ENCODE measurements at regions of chr1 and their contacts with region 1.

Region 1: GRCh38 chr1:47179017-47179987 is 10.5 kb downstream of the PDZK1IP1 start:
- DNase-seq: peak; percentile 68
- H3K4me3 ChIP-seq: peak overlapping the region; percentile 39
- H3K27me3 ChIP-seq: no peaks in the 10 kb centered on the region; the same call in 1 of the 2 replicates
- CTCF ChIP-seq: peak; percentile 99

Region 2: GRCh38 chr1:47067097-47067594 is 112.2 kb before region 1 on chr1 and contains the start of gene CYP4Z1:
- CTCF ChIA-PET with region 1: no interaction called
- POLR2A ChIA-PET with region 1: no interaction called
- DNase-seq: no peak
- H3K4me3 ChIP-seq: no peak within 1 kb of the TSS
- H3K27me3 ChIP-seq: no peaks in the 10 kb centered on the region
- CTCF ChIP-seq: no peak
- polyA plus RNA-seq, gene CYP4Z1: not detected in 2 replicates

Region 3: DNA sequence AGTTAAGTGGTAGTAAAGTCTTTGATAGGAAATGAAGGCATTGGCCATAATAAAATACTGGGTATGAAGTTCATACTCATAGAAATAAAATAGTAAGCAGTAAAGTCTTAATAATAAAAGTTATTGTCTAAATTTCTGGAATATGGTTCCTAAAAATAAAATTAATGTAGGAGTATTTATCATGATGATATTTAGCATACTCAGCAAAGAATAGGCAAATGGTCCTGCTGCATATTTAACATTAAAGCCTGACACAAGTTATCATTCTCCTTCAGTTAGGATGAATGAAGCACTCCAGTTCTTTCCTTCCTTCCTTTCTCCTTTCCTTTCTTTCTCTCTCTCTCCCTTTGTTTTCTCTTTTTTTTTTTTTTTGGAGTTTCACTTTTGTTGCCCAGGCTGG is 14.8 kb before region 1 on chr1:
- CTCF ChIA-PET with region 1: interaction called, 25 read pairs
- POLR2A ChIA-PET with region 1: interaction called, 3 read pairs
- DNase-seq: no peak
- H3K4me3 ChIP-seq: no peak overlapping the region
- H3K27me3 ChIP-seq: no peaks in the 10 kb centered on the region
- CTCF ChIP-seq: no peak

Region 4: DNA sequence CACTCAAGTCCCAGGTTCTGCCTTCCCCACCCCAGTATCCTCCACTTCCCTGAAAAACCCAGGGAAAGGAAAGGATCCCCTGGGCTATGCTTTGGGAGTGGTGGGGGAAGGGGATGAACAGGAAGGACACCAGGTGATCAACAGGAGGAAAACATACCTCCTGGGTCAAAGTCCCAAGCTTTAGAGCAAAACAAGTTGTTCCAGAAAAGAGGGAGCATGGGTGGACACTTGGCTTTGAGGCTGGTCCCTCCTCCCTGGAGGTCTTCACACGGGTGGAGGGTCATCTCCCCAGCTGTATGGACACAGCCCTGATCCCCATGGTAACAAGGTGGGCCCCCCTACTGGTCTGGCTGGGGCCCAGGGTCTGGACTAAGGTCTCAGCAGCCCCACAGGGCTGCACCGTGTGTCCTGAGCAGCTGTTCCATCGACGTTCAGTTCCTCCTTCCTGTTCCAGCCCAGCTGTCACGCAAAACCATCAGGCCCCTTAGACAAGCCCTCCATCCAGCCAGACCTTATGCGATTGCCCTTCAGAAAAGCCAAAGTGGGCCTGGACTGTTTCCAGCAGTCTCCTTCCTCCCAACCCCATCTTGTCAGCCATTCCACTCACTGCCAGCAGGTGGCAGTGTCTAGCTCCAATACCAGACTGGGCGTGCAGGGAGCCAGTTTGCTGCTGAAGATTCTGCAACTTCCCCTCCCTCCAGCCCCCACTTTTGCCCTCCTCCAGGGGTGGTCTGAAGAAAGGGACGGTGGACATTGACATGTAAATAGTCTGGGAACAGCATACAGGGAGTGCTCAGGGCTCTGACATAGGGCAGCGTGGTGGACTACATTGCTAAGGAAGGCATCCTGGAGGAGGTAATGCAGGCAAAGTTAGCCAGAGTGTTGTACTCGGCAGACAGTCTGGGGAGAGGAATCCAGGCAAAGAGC is 13.4 kb after region 1 on chr1:
- CTCF ChIA-PET with region 1: interaction called, 66 read pairs
- POLR2A ChIA-PET with region 1: interaction called, 3 read pairs
- DNase-seq: no peak
- H3K4me3 ChIP-seq: no peak overlapping the region
- H3K27me3 ChIP-seq: peaks cover 4% of the 10 kb centered on the region; the same call in 1 of the 2 replicates
- CTCF ChIP-seq: peak; percentile 97

Region 5: DNA sequence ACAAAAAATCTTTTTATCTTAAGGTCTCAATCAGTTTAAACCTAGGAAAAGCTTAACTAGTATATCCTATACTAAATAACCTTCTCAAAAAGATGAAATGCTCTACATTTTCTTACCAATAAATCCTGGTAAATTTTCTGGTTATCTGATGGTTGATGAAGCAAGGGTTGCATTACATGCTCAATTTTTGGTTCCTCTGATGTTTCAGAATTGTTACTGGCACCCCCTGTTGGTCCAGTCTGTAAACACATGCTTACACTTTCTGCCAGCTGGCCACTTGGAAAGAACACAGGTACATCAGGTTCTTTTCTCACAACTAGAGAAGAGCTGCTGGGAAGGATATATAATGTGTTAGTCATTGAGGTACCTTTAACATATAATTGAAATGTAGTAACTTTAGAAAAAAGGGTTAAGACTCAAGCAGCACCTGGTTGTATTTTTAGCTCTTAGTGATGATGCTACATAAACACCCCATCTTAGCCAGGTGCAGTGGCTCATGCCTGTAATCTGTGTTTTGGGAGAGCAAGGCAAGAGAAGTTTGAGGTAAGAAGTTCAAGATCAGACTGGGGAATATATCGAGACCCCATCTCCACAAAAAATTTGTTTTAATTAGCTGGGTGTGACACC is 83.6 kb after region 1 on chr1:
- CTCF ChIA-PET with region 1: interaction called, 43 read pairs
- POLR2A ChIA-PET with region 1: interaction called, 3 read pairs
- DNase-seq: no peak
- H3K4me3 ChIP-seq: no peak overlapping the region
- H3K27me3 ChIP-seq: no peaks in the 10 kb centered on the region
- CTCF ChIP-seq: peak; percentile 70

Region 6: DNA sequence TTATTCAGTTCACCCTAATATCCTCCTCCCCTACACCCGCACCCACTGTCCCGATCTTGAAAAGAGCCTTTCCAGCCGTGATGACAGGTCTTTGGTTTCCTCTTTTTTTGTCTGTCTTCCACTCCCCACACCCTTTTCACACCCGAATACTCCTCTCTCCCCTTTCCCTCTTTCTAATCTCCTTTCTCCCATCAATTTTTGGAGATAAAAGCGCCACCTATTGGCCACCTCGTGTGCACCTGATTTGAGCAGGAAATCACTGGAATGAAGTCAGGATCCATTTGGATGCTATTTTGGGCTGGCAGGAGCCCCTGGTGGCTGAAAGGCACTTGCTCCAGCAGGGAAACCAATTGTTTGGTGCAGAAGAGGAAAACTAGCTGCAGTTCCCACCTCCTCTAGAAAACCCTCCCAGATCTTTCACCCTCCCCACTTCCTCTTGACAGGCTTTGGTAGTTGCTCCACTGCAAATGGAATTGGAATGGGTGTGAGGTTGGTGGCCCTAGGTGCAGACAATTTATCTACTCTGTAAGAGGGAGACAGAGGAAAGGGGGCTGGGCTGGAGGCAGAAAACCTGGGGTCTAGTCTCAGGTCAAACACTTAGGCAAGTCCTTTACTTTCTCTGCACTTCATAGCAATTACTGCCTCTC is 245.2 kb after region 1 on chr1:
- CTCF ChIA-PET with region 1: interaction called, 17 read pairs
- POLR2A ChIA-PET with region 1: no interaction called
- DNase-seq: no peak
- H3K4me3 ChIP-seq: no peak overlapping the region
- H3K27me3 ChIP-seq: no peaks in the 10 kb centered on the region
- CTCF ChIP-seq: peak; percentile 90

Region 7: DNA sequence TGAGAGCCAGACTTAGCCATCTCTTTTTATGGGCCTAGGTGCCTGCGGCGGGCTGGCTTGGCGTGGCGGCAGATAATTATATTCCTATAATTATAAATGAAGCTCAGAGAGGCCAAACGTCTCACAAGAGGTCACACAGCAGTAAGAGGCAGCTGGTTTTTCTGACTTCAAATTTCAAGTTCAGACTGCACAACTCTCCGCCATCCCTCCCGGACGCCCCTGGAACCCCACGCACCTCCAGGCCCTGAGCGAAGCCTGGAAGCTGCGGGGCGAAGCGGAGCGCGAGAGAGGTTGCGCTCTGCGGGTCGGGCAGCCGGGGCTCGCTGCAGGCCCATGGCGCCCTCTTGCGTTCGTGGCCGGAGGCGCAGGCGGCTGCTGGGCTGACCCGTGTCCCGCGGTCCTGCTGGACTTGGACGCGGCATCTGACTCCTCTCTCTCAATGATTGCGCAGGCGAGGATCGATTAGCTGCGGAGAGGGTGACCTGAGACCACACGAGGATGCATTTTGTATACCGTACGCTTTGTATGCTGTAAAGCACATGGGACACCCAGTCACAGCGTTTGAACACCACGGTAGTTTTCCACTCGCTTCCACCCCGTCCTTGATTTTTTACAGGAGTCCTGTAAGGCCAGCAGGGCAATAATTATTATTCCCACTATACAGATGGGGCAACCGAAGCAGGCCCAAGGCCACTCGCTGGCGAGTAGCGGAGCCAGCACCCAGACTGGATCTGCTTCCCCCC is 531.2 kb after region 1 on chr1:
- CTCF ChIA-PET with region 1: interaction called, 16 read pairs
- POLR2A ChIA-PET with region 1: no interaction called
- DNase-seq: no peak
- H3K4me3 ChIP-seq: no peak overlapping the region
- H3K27me3 ChIP-seq: peaks cover 33% of the 10 kb centered on the region
- CTCF ChIP-seq: peak; percentile 96

Region 8: DNA sequence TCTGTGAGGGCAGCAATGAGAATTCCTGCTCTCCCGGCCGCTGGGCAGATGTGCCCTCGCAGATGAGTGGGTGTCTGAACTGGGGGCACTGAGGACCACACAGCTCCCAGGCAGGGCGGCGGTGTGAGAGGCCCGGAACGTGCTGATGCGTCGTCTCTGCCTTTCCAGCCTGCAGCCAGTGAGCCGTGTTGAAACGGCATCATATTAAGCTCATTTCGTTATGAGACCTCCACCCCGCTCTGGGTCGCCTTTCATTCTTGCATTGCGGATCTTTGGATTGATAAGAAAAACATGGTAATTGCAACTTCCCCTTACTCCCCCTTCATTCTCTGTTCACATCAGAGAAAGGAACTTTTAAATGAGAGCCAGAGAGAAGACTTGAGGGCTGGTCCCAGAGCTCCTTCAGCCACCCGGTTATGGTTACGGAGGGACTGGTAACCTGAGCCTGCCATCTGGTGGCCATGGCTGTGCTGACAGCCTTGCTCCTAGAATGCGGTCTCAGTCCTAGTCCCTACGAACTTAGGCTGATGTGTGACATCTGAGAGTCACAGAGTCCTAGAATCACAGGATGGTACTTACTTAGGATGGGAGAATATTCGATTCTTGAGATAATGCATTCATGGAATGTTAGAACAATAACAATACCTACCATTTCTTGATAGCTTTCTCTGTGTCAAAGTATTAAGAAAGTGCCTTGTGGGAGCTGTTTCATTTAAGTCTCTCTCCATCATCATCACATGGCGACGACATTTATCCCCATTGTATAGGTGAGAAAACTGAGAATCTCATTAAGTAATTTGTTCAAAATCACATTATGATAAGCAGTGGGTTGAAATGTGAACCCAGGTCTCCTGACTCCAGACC is 546.9 kb after region 1 on chr1:
- CTCF ChIA-PET with region 1: interaction called, 11 read pairs
- POLR2A ChIA-PET with region 1: no interaction called
- DNase-seq: no peak
- H3K4me3 ChIP-seq: no peak overlapping the region
- H3K27me3 ChIP-seq: peaks cover 15% of the 10 kb centered on the region
- CTCF ChIP-seq: peak; percentile 95